SK-N-SH (cell line): ENCODE measurements at regions of chr7 and their contacts with region 1.

Region 1: DNA sequence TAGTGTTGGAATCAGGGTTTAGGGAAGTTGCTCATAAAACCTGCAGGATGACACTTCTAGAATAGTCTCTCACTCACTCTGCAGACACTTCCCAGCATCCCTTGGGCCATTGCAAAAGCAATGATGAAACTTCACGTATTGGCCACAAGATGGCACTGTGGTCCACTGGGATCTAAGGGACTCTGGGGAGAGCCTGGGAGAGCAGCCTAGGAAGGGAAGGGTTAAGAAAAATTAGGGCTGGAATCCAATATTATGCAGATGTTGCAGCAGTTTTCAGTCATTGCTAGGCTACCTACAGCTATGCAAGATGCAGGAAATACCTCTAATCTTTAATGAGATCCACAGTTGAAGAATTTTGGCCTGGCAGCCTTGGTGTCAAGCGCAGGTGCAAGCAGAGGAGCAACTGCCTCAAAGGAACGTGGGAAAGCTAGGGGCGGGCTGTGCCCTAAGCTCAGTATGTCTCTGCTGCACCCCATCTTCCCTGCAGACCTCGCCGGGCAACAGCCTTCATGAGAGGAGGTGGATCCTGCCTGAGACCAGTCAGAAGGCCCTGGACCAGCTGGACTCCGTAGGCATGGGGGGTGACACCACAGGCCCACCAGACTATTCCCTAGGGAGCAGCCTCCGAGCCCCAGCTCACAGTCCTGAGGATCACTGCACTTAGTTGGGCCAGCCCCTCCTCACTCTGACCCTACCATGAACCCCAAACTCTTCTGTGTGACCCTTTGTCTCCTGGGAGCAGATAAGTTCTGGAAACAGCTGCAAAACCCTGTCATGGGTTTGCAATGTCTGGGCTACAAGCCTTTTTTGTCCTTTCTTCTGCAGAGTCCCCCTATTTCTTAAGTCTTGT is 127.9 kb upstream of the PRSS58 start:
- DNase-seq: peak; percentile 62
- H3K4me3 ChIP-seq: no peak overlapping the region
- H3K27ac ChIP-seq: no peak overlapping the region
- H3K4me1 ChIP-seq: peaks cover 0 to 15% of the 10 kb centered on the region in 2 experiments; a peak in 1 of 4 replicates
- H3K27me3 ChIP-seq: no peaks in the 10 kb centered on the region
- CTCF ChIP-seq: peak; percentile 87
- EP300 ChIP-seq: no peak
- RAD21 ChIP-seq: peak; percentile 65

Region 2: GRCh38 chr7:142371586-142372377 is 13.9 kb before region 1 on chr7:
- CTCF ChIA-PET with region 1: interaction called, 16 read pairs
- POLR2A ChIA-PET with region 1: no interaction called
- DNase-seq: no peak
- H3K4me3 ChIP-seq: no peak overlapping the region
- H3K27ac ChIP-seq: no peak overlapping the region
- H3K4me1 ChIP-seq: peaks cover 0 to 3% of the 10 kb centered on the region in 2 experiments; a peak in 1 of 4 replicates
- H3K27me3 ChIP-seq: no peaks in the 10 kb centered on the region; the same call in 1 of the 2 replicates
- CTCF ChIP-seq: no peak
- EP300 ChIP-seq: no peak
- RAD21 ChIP-seq: no peak

Region 3: DNA sequence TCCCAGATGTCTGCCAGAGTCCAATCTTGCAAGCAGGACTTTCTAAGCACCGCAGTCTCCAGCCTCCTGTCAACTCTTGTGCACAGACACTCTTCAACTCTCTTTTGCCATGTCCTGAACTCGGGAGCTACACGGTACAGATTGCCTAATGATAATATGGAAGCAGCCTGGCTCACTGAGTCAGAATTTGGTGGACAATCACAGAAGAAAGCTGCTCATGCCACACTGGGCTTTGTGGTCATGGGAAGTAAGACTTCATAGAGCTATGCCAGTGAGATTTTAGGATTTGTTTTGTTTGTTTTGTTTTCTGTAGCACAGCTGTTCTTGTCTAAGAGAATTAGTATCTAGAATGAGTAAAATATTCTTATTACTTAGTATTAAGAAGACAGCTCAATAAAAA is 16.2 kb after region 1 on chr7:
- CTCF ChIA-PET with region 1: interaction called, 11 read pairs
- POLR2A ChIA-PET with region 1: no interaction called
- DNase-seq: no peak
- H3K4me3 ChIP-seq: no peak overlapping the region
- H3K27ac ChIP-seq: no peak overlapping the region
- H3K4me1 ChIP-seq: no peaks in the 10 kb centered on the region
- H3K27me3 ChIP-seq: peaks cover 53% of the 10 kb centered on the region
- CTCF ChIP-seq: no peak
- EP300 ChIP-seq: no peak
- RAD21 ChIP-seq: no peak

Region 4: GRCh38 chr7:142412551-142413193 is 27.0 kb after region 1 on chr7:
- CTCF ChIA-PET with region 1: interaction called, 18 read pairs
- POLR2A ChIA-PET with region 1: no interaction called
- DNase-seq: peak; percentile 54
- H3K4me3 ChIP-seq: no peak overlapping the region
- H3K27ac ChIP-seq: no peak overlapping the region
- H3K4me1 ChIP-seq: no peaks in the 10 kb centered on the region
- H3K27me3 ChIP-seq: no peaks in the 10 kb centered on the region
- CTCF ChIP-seq: peak; percentile 94
- EP300 ChIP-seq: no peak
- RAD21 ChIP-seq: peak; percentile 64

Region 5: DNA sequence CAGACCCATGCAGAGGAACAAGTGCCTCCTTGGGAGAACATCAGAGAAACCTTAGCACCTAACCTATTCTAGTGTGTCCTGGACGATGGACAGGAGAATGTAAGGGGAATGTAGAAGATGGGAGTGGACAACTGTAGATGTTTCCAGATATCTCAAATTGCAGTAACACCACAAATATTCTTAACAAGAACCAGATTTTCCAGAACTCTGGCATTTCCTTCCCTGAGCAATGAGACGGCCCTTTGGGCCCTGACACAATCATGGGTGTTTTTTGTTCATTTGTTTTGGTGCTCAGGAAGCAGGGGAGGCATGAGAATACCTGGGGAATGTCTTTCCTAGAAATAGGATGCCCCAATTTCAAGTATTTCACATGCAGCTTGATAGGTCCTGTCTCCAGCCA is 167.5 kb after region 1 on chr7:
- CTCF ChIA-PET with region 1: no interaction called
- POLR2A ChIA-PET with region 1: no interaction called
- DNase-seq: no peak
- H3K4me3 ChIP-seq: no peak overlapping the region
- H3K27ac ChIP-seq: peak overlapping the region in 1 of 2 experiments; percentile 51; a peak in 1 of 4 replicates
- H3K4me1 ChIP-seq: peaks cover 17 to 40% of the 10 kb centered on the region in 2 experiments
- H3K27me3 ChIP-seq: no peaks in the 10 kb centered on the region
- CTCF ChIP-seq: no peak
- EP300 ChIP-seq: peak in 1 of 2 experiments; percentile 52; a peak in 1 of 4 replicates
- RAD21 ChIP-seq: no peak

Region 6: GRCh38 chr7:142669074-142669654 is 283.4 kb after region 1 on chr7:
- CTCF ChIA-PET with region 1: no interaction called
- POLR2A ChIA-PET with region 1: no interaction called
- DNase-seq: peak; percentile 12
- H3K4me3 ChIP-seq: no peak overlapping the region
- H3K27ac ChIP-seq: no peak overlapping the region
- H3K4me1 ChIP-seq: no peaks in the 10 kb centered on the region; a peak in 2 of 4 replicates
- H3K27me3 ChIP-seq: no peaks in the 10 kb centered on the region
- CTCF ChIP-seq: peak; percentile 58
- EP300 ChIP-seq: no peak
- RAD21 ChIP-seq: peak; percentile 43; the same call in 1 of the 2 replicates